ENCODE measurements at regions of chr6 and their contacts with region 1.

Region 1: GRCh38 chr6:143586557-143586956 is 75.0 kb upstream of the FUCA2 start:
- DNase-seq: no peak
- H3K4me3 Mint-ChIP-seq: no peak overlapping the region
- H3K27ac Mint-ChIP-seq: no peak overlapping the region
- H3K4me1 Mint-ChIP-seq: peaks cover 5% of the 10 kb centered on the region
- H3K27me3 Mint-ChIP-seq: no peaks in the 10 kb centered on the region

Region 2: GRCh38 chr6:143607974-143608373 is 21.4 kb after region 1 on chr6:
- CTCF ChIA-PET with region 1: no interaction called
- POLR2A ChIA-PET with region 1: no interaction called
- intact Hi-C with region 1: no loop called
- DNase-seq: no peak
- H3K4me3 Mint-ChIP-seq: no peak overlapping the region
- H3K27ac Mint-ChIP-seq: no peak overlapping the region
- H3K4me1 Mint-ChIP-seq: peaks cover 34% of the 10 kb centered on the region
- H3K27me3 Mint-ChIP-seq: no peaks in the 10 kb centered on the region

Region 3: GRCh38 chr6:143620447-143620846 is 33.9 kb after region 1 on chr6:
- CTCF ChIA-PET with region 1: no interaction called
- POLR2A ChIA-PET with region 1: no interaction called
- intact Hi-C with region 1: loop called (anchors 5 kb)
- DNase-seq: no peak
- H3K4me3 Mint-ChIP-seq: no peak overlapping the region
- H3K27ac Mint-ChIP-seq: no peak overlapping the region
- H3K4me1 Mint-ChIP-seq: peaks cover 39% of the 10 kb centered on the region
- H3K27me3 Mint-ChIP-seq: no peaks in the 10 kb centered on the region